ENCODE measurements at regions of chr6 and their contacts with region 1.

Region 1: DNA sequence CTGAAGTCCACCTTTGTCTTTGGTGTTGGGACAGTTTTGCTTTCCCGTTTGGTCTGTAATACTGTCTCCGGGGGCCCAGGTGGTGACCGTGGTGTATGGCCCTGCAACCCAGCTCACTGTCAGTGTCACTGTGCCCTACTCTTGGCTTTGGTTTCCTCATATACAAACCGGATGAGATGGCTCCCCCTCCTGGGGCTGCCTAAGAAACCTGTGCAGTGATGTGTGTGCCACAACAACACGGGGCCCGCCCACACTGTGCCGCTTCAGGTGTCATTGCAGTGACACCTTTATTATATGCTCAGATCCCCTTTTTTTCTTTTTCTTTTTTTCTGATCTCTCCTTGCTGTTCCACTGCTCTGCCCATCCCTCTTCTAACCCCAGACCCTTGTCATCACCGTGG is 73.9 kb downstream of the RAMACL start:
- DNase-seq: peak; percentile 25 to 52 (median 47)
- H3K4me3 ChIP-seq: no peak overlapping the region
- H3K4me3 Mint-ChIP-seq: peak overlapping the region in 1 of 8 donors; percentile 47
- H3K27ac ChIP-seq: no peak overlapping the region
- H3K27ac Mint-ChIP-seq: peak overlapping the region in 5 of 7 donors; percentile 8 to 74 (median 25)
- H3K4me1 ChIP-seq: peaks cover 8% of the 10 kb centered on the region
- H3K4me1 Mint-ChIP-seq: peaks cover 7 to 13% (median 8%) of the 10 kb centered on the region in 4 donors
- H3K27me3 ChIP-seq: no peaks in the 10 kb centered on the region
- H3K27me3 Mint-ChIP-seq: no peaks in the 10 kb centered on the region

Region 2: DNA sequence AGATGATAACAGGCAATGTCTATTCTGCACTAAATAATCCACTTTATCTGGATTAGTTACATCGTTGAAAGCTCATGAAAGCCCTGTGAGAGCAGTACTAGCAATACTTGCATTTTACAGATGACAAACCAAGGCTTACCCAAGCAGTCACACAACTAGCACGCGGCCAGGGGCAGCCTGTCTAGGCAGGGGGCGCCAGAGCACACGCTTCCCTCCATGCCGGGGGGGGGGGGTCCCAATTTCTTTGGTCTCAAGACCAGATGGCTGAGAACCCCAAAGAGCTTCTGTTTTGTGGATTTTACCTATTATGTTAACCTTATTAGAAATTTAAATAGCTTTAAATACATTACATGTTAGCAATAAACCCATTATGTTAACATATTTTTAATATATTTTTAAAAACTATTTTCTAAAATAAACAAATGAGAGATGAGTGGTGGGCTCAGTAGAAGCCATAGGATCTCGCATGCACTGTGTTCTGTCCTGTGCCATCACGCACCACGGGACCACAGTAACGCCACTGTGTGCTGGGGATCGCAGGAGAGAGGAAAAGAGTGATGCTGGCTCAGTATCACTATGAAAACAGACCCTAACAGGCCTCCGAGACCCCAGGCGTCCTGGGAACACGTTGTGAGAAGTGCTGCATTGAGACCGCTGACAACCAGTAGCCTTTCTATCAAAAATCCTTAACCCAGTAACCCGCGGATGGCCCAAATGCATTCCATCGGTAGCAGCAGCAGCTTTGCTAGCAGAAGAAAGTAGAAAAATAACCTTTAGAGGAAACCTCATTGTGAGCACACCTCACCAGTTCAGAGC is 199.1 kb before region 1 on chr6:
- CTCF ChIA-PET with region 1: interaction called, 12 read pairs
- POLR2A ChIA-PET with region 1: no interaction called
- intact Hi-C with region 1: loop called (anchors 1 kb)
- DNase-seq: peak in 4 of 5 donors; percentile 8 to 55 (median 32)
- H3K4me3 ChIP-seq: no peak overlapping the region
- H3K4me3 Mint-ChIP-seq: no peak overlapping the region
- H3K27ac ChIP-seq: no peak overlapping the region
- H3K27ac Mint-ChIP-seq: no peak overlapping the region
- H3K4me1 ChIP-seq: peaks cover 3% of the 10 kb centered on the region
- H3K4me1 Mint-ChIP-seq: peaks cover 0 to 6% (median 2%) of the 10 kb centered on the region in 4 donors
- H3K27me3 ChIP-seq: peaks cover 6% of the 10 kb centered on the region
- H3K27me3 Mint-ChIP-seq: peaks cover 7 to 15% of the 10 kb centered on the region in 2 donors

Region 3: DNA sequence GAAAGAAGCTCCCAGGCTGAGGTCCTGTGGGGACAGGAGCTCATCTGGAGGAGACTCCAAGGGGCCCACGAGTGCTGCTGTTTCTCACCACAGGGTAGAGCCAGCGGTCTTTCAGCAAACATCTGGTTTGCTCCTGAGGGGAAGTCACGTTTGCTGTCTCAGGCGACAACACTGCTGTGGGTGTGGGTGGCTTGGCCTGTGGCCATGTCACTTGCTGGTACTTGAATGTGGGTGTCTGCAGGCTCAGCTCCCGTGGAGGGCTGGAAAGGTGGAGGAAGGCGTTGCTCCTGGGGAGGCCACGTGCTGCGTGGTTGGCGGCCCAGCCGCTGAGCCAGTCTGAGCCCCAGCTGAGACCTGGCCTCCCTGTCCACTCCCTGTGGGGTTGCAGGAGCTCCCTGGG is 77.0 kb before region 1 on chr6:
- CTCF ChIA-PET with region 1: interaction called, 17 read pairs
- POLR2A ChIA-PET with region 1: no interaction called
- intact Hi-C with region 1: loop called (anchors 1 kb)
- DNase-seq: peak; percentile 26 to 58 (median 43)
- H3K4me3 ChIP-seq: no peak overlapping the region
- H3K4me3 Mint-ChIP-seq: peak overlapping the region in 3 of 8 donors; percentile 26 to 83 (median 36)
- H3K27ac ChIP-seq: no peak overlapping the region
- H3K27ac Mint-ChIP-seq: peak overlapping the region in 6 of 7 donors; percentile 9 to 89 (median 72)
- H3K4me1 ChIP-seq: peaks cover 23% of the 10 kb centered on the region
- H3K4me1 Mint-ChIP-seq: peaks cover 16 to 33% (median 26%) of the 10 kb centered on the region in 4 donors
- H3K27me3 ChIP-seq: no peaks in the 10 kb centered on the region
- H3K27me3 Mint-ChIP-seq: no peaks in the 10 kb centered on the region

Region 4: DNA sequence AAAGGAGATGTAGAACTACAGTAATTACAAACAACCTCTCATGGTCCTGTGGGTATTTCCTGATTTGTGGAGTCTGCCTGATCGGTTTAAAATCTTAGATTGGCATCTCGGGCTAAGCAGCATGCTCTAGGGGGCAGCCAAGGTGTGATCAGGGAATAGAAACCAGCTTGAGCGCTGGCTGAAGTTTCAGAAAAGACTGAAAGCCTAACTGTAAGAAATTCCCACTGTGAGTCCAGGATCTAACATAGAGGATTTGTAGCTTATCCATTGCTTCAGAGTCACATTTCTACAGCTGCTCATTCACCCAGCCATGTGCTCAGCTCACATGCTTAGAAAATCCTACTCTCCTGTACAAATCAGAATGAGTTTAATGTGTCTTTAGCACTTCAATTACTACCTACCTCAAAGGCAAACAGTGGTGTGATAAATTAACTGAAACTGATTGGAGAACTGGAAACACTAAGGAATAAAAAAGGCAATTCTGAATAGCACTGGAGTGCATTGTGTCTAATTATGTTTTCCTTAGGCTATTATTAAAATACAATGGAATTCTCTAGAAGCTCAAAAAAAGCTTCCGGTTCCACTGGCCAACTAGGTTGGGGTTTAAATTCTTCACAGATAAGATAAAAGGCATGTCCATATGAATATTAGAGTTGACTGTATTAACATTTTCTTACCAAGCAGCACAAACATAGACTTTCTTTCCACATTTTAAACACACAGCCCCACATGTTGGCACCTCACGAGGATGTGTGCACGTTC is 56.0 kb before region 1 on chr6:
- CTCF ChIA-PET with region 1: interaction called, 20 read pairs
- POLR2A ChIA-PET with region 1: interaction called, 3 read pairs
- intact Hi-C with region 1: loop called (anchors 1 kb)
- DNase-seq: peak in 2 of 5 donors; percentile 13 to 24
- H3K4me3 ChIP-seq: no peak overlapping the region
- H3K4me3 Mint-ChIP-seq: no peak overlapping the region
- H3K27ac ChIP-seq: no peak overlapping the region
- H3K27ac Mint-ChIP-seq: peak overlapping the region in 3 of 7 donors; percentile 24 to 63 (median 38)
- H3K4me1 ChIP-seq: no peaks in the 10 kb centered on the region
- H3K4me1 Mint-ChIP-seq: peaks cover 0 to 2% (median under 1%) of the 10 kb centered on the region in 4 donors
- H3K27me3 ChIP-seq: no peaks in the 10 kb centered on the region
- H3K27me3 Mint-ChIP-seq: no peaks in the 10 kb centered on the region

Region 5: DNA sequence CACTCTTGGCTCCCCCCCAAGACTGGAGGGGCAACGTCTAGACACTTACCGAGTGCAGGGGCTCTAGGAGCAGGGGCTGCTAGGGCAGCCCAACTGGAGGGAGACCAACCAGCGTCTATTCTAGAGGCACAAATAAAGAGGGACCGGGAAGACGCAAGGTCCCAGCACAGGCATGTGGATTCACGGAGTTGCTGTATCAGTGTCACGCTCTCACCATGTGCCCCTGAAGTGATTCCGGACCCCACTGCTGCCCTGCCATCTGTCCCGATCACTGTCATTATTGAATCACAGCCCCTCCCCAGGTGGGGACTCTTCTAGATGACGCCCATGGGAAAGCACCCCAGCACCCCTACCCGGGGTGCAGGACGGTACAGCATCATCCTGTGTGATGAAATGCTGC is 19.7 kb after region 1 on chr6:
- CTCF ChIA-PET with region 1: no interaction called
- POLR2A ChIA-PET with region 1: no interaction called
- intact Hi-C with region 1: no loop called
- DNase-seq: no peak
- H3K4me3 ChIP-seq: no peak overlapping the region
- H3K4me3 Mint-ChIP-seq: no peak overlapping the region
- H3K27ac ChIP-seq: no peak overlapping the region
- H3K27ac Mint-ChIP-seq: no peak overlapping the region
- H3K4me1 ChIP-seq: no peaks in the 10 kb centered on the region
- H3K4me1 Mint-ChIP-seq: no peaks in the 10 kb centered on the region
- H3K27me3 ChIP-seq: no peaks in the 10 kb centered on the region
- H3K27me3 Mint-ChIP-seq: peaks cover 0 to 2% of the 10 kb centered on the region in 2 donors

Measured in CD4-positive, alpha-beta memory T cell (primary cell).